Transverse colon (tissue), 4 donors: ENCODE measurements at regions of chr1 and their contacts with region 1.

Region 1: GRCh38 chr1:213438339-213438738 is 387.3 kb downstream of the RPS6KC1 start:
- DNase-seq: no peak
- H3K4me3 ChIP-seq: no peak overlapping the region
- H3K27ac ChIP-seq: no peak overlapping the region
- H3K4me1 ChIP-seq: no peaks in the 10 kb centered on the region
- H3K27me3 ChIP-seq: no peaks in the 10 kb centered on the region
- CTCF ChIP-seq: no peak
- EP300 ChIP-seq: no peak
- POLR2A ChIP-seq: no peak

Region 2: DNA sequence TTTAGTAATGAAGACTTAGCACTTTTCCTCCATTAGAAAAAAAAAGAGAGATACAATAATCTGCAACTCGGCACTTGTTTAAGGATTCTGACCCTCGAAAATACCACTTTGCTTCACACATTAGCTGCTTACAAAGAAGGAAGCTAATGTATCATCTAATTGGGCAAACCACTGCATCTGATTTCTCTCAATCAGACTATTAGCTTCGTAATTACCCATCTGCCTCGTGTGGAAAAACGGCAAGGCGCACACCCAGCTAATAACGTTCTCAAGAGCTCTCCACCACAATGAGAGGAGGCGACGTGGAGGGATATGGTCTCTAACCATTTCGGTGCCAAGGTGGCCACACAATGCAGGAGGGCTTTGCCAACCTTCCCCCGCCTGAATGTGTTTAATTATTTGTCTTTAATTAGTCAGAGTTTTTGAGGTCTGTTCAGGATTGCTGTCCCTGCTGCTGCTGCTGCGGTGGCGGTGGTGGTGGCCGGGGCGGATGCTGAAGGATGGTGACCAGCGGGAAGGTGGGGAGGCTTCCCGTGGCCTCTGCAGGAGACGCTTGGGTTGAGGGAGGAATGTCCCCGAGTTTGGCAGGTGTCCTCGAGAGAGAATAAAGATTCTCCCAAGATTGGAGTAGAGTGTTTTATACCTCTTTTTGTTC is 12.8 kb before region 1 on chr1:
- in situ Hi-C with region 1: no loop called
- intact Hi-C with region 1: loop called (anchors 1 kb)
- DNase-seq: no peak
- H3K4me3 ChIP-seq: no peak overlapping the region
- H3K27ac ChIP-seq: no peak overlapping the region
- H3K4me1 ChIP-seq: no peaks in the 10 kb centered on the region
- H3K27me3 ChIP-seq: no peaks in the 10 kb centered on the region
- CTCF ChIP-seq: no peak
- EP300 ChIP-seq: no peak
- POLR2A ChIP-seq: no peak